Dendritic cell treated with granulocyte-macrophage colony-stimulating factor and Interleukin-4, amounts not matched to agents 40 ng/mL and 50 ng/mL, for 4 days (primary cell): ENCODE measurements at regions of chr1 and their contacts with region 1.

Region 1: GRCh38 chr1:96236156-96236739 is 485.3 kb upstream of the PTBP2 start:
- H3K4me3 Mint-ChIP-seq: no peak overlapping the region
- H3K27ac Mint-ChIP-seq: no peak overlapping the region
- H3K4me1 Mint-ChIP-seq: no peaks in the 10 kb centered on the region
- H3K27me3 Mint-ChIP-seq: no peaks in the 10 kb centered on the region

Region 2: GRCh38 chr1:96756789-96757188 is 520.5 kb after region 1 on chr1:
- intact Hi-C with region 1: loop called (anchors 5 kb)
- H3K4me3 Mint-ChIP-seq: no peak overlapping the region
- H3K27ac Mint-ChIP-seq: no peak overlapping the region
- H3K4me1 Mint-ChIP-seq: no peaks in the 10 kb centered on the region
- H3K27me3 Mint-ChIP-seq: no peaks in the 10 kb centered on the region

Region 3: GRCh38 chr1:96845464-96845863 is 609.2 kb after region 1 on chr1:
- intact Hi-C with region 1: loop called (anchors 1 kb)
- H3K4me3 Mint-ChIP-seq: no peak overlapping the region
- H3K27ac Mint-ChIP-seq: no peak overlapping the region
- H3K4me1 Mint-ChIP-seq: no peaks in the 10 kb centered on the region
- H3K27me3 Mint-ChIP-seq: no peaks in the 10 kb centered on the region